HEK293 (cell line): ENCODE measurements at regions of chr12 and their contacts with region 1.

Region 1: GRCh38 chr12:11797317-11797913 is 147.9 kb downstream of the ETV6 start:
- H3K4me3 ChIP-seq: no peak overlapping the region
- H3K27ac ChIP-seq: no peak overlapping the region
- H3K4me1 ChIP-seq: peaks cover 12% of the 10 kb centered on the region
- CTCF ChIP-seq: no peak

Region 2: GRCh38 chr12:11746024-11746771 is 51.2 kb before region 1 on chr12:
- CTCF ChIA-PET with region 1: no interaction called
- POLR2A ChIA-PET with region 1: no interaction called
- H3K4me3 ChIP-seq: no peak overlapping the region
- H3K27ac ChIP-seq: no peak overlapping the region
- H3K4me1 ChIP-seq: no peaks in the 10 kb centered on the region
- CTCF ChIP-seq: no peak

Region 3: DNA sequence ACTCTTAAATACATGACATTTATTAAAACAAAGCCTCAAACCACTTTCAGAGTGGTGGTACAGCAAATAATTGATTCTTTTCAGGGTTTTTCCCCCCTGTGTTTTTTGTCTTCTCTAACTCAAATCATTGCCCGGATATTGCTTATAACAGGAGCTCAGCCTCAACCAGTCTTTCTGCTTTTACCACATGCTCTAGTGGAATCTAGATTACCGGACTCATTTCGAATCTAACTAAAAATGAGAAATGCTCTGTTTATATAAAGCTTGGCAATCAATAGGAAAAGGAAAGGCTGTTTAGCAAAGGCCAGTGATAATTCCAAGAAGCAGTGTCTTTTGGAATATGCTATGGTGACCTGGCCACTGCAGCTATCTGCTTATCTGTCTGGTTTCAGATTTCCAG is 13.6 kb after region 1 on chr12:
- CTCF ChIA-PET with region 1: interaction called, 12 read pairs
- POLR2A ChIA-PET with region 1: interaction called, 3 read pairs
- H3K4me3 ChIP-seq: no peak overlapping the region
- H3K27ac ChIP-seq: no peak overlapping the region
- H3K4me1 ChIP-seq: no peaks in the 10 kb centered on the region
- CTCF ChIP-seq: no peak